Activated CD8-positive, alpha-beta T cell treated with anti-CD3 and anti-CD28 coated beads, Interleukin-2, amount 10 ng/mL, durations not matched to agents 7 days and 5 days (primary cell): ENCODE measurements at regions of chr12 and their contacts with region 1.

Region 1: GRCh38 chr12:8544295-8544694 is 3.6 kb upstream of the CLEC4E start:
- DNase-seq: peak; percentile 83
- ATAC-seq: peak; percentile 76
- H3K4me3 Mint-ChIP-seq: no peak overlapping the region
- H3K27ac Mint-ChIP-seq: no peak overlapping the region
- H3K4me1 Mint-ChIP-seq: peaks cover 9% of the 10 kb centered on the region
- H3K27me3 Mint-ChIP-seq: peaks cover 43% of the 10 kb centered on the region

Region 2: GRCh38 chr12:7947011-7947699 is 597.1 kb before region 1 on chr12:
- CTCF ChIA-PET with region 1: no interaction called
- POLR2A ChIA-PET with region 1: no interaction called
- DNase-seq: no peak
- ATAC-seq: no peak
- H3K4me3 Mint-ChIP-seq: no peak overlapping the region
- H3K27ac Mint-ChIP-seq: no peak overlapping the region
- H3K4me1 Mint-ChIP-seq: peaks cover 10% of the 10 kb centered on the region
- H3K27me3 Mint-ChIP-seq: no peaks in the 10 kb centered on the region

Region 3: DNA sequence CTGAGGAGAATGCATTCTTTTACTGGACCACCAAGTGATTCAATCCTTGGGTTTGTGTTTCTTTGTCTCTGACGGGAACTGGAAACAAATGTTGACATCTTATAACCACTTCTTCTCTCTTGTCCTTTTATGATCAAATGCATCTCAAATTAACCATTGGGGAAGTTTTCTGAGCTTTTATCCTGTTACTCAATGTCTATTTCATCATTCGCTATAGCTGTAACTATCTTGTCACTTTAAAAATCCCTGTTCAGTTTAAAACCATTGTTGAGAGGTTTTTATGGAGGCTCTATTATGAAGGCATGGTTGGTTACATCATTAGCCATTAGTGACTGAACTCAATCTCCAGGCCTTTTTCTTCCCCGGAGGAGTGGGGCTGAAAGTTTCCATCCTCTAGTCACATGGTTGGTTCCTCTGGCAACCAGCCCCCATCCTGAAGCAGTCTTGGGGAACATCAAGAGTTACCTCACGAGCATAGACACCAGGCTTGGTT is 91.2 kb before region 1 on chr12:
- CTCF ChIA-PET with region 1: interaction called, 10 read pairs
- POLR2A ChIA-PET with region 1: no interaction called
- DNase-seq: no peak
- ATAC-seq: no peak
- H3K4me3 Mint-ChIP-seq: no peak overlapping the region
- H3K27ac Mint-ChIP-seq: no peak overlapping the region
- H3K4me1 Mint-ChIP-seq: no peaks in the 10 kb centered on the region
- H3K27me3 Mint-ChIP-seq: peaks cover 43% of the 10 kb centered on the region

Region 4: GRCh38 chr12:8554451-8555195 is 10.3 kb after region 1 on chr12:
- CTCF ChIA-PET with region 1: interaction called, 24 read pairs
- POLR2A ChIA-PET with region 1: no interaction called
- DNase-seq: no peak
- ATAC-seq: no peak
- H3K4me3 Mint-ChIP-seq: no peak overlapping the region
- H3K27ac Mint-ChIP-seq: no peak overlapping the region
- H3K4me1 Mint-ChIP-seq: no peaks in the 10 kb centered on the region
- H3K27me3 Mint-ChIP-seq: peaks cover 10% of the 10 kb centered on the region

Region 5: GRCh38 chr12:8590842-8591550 is 46.7 kb after region 1 on chr12:
- CTCF ChIA-PET with region 1: interaction called, 18 read pairs
- POLR2A ChIA-PET with region 1: no interaction called
- DNase-seq: no peak
- ATAC-seq: peak; percentile 57
- H3K4me3 Mint-ChIP-seq: no peak overlapping the region
- H3K27ac Mint-ChIP-seq: no peak overlapping the region
- H3K4me1 Mint-ChIP-seq: peaks cover 6% of the 10 kb centered on the region
- H3K27me3 Mint-ChIP-seq: no peaks in the 10 kb centered on the region

Region 6: GRCh38 chr12:8658346-8658745 is 114.1 kb after region 1 on chr12:
- CTCF ChIA-PET with region 1: interaction called, 18 read pairs
- POLR2A ChIA-PET with region 1: no interaction called
- DNase-seq: no peak
- ATAC-seq: no peak
- H3K4me3 Mint-ChIP-seq: no peak overlapping the region
- H3K27ac Mint-ChIP-seq: no peak overlapping the region
- H3K4me1 Mint-ChIP-seq: no peaks in the 10 kb centered on the region
- H3K27me3 Mint-ChIP-seq: peaks cover 12% of the 10 kb centered on the region

Region 7: DNA sequence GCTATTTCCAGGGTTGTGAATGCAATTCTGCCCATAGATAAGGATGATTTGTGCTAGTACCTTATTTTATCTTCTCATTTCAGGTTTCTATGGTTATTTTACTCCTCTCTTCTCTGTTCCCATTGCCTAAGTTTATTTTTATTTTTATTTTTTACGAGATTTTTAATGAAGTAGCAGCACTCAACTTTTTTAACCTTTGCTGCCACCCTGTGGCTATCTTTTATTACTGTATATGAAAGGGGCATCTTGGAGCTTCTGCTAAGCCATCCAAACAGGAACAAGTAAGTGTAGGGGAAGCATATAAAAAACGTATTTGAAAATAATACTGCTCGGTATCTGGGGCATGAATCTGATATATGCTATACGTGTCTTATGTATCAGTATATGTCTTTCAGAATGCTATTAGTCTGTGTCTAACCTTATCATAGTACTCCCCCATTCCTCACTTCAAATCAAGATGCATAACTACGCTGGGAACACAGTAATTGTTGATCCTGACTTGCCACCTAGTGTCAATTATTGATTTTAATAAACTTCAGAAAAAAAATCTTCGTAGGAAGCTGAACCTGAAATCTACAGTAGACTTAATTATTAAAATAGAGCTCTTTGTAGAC is 505.3 kb after region 1 on chr12:
- CTCF ChIA-PET with region 1: interaction called, 26 read pairs
- POLR2A ChIA-PET with region 1: no interaction called
- DNase-seq: peak; percentile 56
- ATAC-seq: peak; percentile 72
- H3K4me3 Mint-ChIP-seq: no peak overlapping the region
- H3K27ac Mint-ChIP-seq: no peak overlapping the region
- H3K4me1 Mint-ChIP-seq: peaks cover 14% of the 10 kb centered on the region
- H3K27me3 Mint-ChIP-seq: no peaks in the 10 kb centered on the region